A673 (cell line): ENCODE measurements at regions of chr1 and their contacts with region 1.

Region 1: DNA sequence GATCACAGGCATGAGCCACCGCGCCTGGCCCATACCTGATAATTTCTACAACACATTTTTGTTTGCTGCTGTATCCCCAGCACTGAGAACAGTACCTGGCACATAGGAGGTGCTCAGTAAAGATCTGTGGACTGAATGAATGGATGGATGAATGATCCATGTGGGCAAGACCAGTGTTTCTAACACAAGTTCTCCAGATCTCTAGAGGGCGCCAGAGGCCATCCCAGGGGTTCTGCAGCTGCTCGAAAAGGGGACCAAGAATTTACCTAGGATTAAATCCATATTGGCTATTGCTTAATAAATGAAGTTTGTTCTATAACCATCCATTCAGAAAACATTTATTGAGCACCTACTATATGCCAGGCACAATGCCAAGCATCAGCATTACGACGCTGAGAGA is 167.7 kb downstream of the ACTL8 start:
- DNase-seq: peak; percentile 59
- H3K4me3 ChIP-seq: no peak overlapping the region
- H3K27ac ChIP-seq: no peak overlapping the region
- H3K4me1 ChIP-seq: no peaks in the 10 kb centered on the region
- H3K27me3 ChIP-seq: no peaks in the 10 kb centered on the region
- CTCF ChIP-seq: peak; percentile 78

Region 2: DNA sequence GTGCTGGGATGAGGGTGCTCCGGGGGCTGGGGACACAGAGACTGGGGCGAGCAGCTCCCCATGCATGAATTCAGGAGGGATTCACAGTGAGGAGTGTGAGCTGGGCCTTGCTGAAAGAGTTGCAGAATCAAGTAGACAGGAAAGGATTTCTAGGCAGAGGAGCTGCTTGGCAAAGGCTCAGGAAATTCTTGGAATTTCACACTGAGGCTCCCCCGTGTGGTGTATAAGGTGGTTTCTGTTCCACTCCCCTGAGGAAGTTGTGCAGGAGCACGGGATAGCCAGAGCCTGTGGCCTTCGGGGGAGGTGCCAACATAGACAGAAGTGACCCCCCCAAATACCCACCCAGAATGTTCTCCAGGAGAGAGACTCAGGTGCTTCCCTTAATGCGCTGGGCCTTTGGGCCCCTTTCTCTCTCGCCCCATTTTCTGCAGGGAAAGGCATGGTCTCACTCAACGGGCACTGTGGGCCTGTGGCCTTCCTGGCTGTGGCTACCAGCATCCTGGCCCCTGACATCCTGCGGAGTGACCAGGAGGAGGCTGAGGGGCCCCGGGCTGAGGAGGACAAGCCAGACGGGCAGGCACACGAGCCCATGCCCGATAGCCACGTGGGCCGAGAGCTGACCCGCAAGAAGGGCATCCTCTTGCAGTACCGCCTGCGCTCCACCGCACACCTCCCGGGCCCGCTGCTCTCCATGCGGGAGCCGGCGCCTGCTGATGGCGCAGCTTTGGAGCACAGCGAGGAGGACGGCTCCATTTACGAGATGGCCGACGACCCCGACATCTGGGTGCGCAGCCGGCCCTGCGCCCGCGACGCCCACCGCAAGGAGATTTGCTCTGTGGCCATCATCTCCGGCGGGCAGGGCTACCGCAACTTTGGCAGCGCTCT is 226.2 kb before region 1 on chr1:
- CTCF ChIA-PET with region 1: no interaction called
- POLR2A ChIA-PET with region 1: no interaction called
- intact Hi-C with region 1: no loop called
- DNase-seq: peak; percentile 79
- H3K4me3 ChIP-seq: no peak overlapping the region
- H3K27ac ChIP-seq: no peak overlapping the region
- H3K4me1 ChIP-seq: peaks cover 8% of the 10 kb centered on the region
- H3K27me3 ChIP-seq: no peaks in the 10 kb centered on the region
- CTCF ChIP-seq: peak; percentile 67

Region 3: DNA sequence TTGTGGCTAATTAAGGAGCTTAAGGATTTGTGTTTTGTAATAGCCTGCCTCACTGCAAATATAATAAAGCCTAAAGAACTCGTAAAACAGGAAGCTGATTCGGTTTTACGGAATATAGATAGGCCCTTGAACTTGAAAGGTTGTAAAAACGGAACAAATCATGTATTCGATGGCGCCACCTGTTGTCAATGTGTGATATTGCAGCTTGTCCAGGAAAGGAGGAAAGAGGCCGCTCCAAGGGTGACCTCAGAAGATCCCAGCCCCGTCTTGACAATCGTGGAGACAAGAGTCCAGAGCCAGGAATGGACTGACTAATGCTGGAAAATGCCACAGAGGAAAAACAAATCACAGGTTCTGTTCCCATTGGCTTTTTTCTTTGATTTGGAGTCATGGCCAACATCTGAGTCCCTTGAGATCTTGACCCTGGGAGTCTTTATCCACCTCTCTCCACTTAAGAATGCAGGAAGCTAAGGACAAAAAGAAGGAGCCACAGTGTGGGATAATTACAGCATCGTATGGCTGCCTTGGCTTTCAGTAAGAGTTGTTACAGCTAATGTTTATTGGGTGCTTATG is 177.7 kb after region 1 on chr1:
- CTCF ChIA-PET with region 1: interaction called, 12 read pairs
- POLR2A ChIA-PET with region 1: no interaction called
- intact Hi-C with region 1: loop called (anchors 2 kb)
- DNase-seq: peak; percentile 75
- H3K4me3 ChIP-seq: no peak overlapping the region
- H3K27ac ChIP-seq: no peak overlapping the region
- H3K4me1 ChIP-seq: no peaks in the 10 kb centered on the region
- H3K27me3 ChIP-seq: no peaks in the 10 kb centered on the region
- CTCF ChIP-seq: peak; percentile 90

Region 4: GRCh38 chr1:18217398-18218043 is 294.7 kb after region 1 on chr1:
- CTCF ChIA-PET with region 1: no interaction called
- POLR2A ChIA-PET with region 1: no interaction called
- intact Hi-C with region 1: loop called (anchors 5 kb)
- DNase-seq: peak; percentile 49
- H3K4me3 ChIP-seq: no peak overlapping the region
- H3K27ac ChIP-seq: no peak overlapping the region
- H3K4me1 ChIP-seq: no peaks in the 10 kb centered on the region
- H3K27me3 ChIP-seq: no peaks in the 10 kb centered on the region
- CTCF ChIP-seq: peak; percentile 67

Region 5: GRCh38 chr1:18575620-18576019 is 652.8 kb after region 1 on chr1:
- CTCF ChIA-PET with region 1: interaction called, 10 read pairs
- POLR2A ChIA-PET with region 1: no interaction called
- intact Hi-C with region 1: loop called (anchors 5 kb)
- DNase-seq: peak; percentile 79
- H3K4me3 ChIP-seq: no peak overlapping the region
- H3K27ac ChIP-seq: no peak overlapping the region
- H3K4me1 ChIP-seq: no peaks in the 10 kb centered on the region
- H3K27me3 ChIP-seq: no peaks in the 10 kb centered on the region
- CTCF ChIP-seq: peak; percentile 92